ENCODE measurements at regions of chr12 and their contacts with region 1.

Region 1: GRCh38 chr12:79373896-79374499 is 316.8 kb downstream of the PAWR start:
- DNase-seq: no peak
- ATAC-seq: peak; percentile 99
- H3K4me3 ChIP-seq: no peak overlapping the region
- H3K27ac ChIP-seq: no peak overlapping the region
- H3K4me1 ChIP-seq: no peaks in the 10 kb centered on the region
- H3K27me3 ChIP-seq: no peaks in the 10 kb centered on the region
- CTCF ChIP-seq: peak; percentile 33 to 91 (median 86); a peak in 4 of 6 replicates
- POLR2A ChIP-seq: no peak
- RAD21 ChIP-seq: peak; percentile 71

Region 2: DNA sequence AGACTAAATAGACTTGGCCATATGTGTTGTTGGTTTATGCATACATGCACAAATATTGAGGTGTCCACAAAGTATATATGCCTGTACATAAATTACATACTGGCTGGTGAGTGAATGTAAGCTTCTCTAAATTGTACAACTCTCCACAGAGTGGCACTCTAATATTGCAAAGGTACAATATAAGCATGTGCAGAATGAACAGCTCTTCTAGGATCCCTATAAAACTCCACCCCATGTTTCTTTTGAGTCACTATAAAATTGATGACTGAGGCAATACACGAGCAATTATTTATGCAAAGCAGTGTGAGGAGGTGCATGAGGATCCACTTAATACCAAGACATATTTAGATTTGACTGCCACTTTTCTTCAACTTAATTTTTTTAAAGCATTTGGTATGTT is 1371.1 kb before region 1 on chr12:
- CTCF ChIA-PET with region 1: no interaction called
- POLR2A ChIA-PET with region 1: no interaction called
- RAD21 ChIA-PET with region 1: no interaction called
- intact Hi-C with region 1: loop called (anchors 5 kb)
- DNase-seq: no peak
- ATAC-seq: no peak
- H3K4me3 ChIP-seq: no peak overlapping the region
- H3K27ac ChIP-seq: no peak overlapping the region
- H3K4me1 ChIP-seq: no peaks in the 10 kb centered on the region
- H3K27me3 ChIP-seq: no peaks in the 10 kb centered on the region
- CTCF ChIP-seq: no peak
- POLR2A ChIP-seq: no peak
- RAD21 ChIP-seq: peak; percentile 42

Region 3: DNA sequence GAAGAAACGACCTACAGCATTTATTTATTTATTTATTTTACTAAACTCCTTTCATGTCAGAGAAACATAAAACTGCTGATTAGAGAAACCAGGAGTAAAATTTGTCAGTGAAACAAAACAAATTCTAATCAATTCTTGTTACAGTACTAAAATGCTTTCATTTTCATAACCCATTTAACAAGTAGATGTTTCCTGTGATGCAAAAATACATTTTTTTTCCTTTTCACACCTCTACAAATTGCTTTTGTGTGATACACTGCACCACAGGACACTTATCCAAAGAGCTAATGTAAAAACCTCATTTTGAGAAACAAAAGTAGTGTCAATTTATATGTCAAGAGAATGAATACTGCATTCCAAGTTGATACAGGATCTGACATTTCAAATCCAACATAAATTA is 354.3 kb before region 1 on chr12:
- CTCF ChIA-PET with region 1: no interaction called
- POLR2A ChIA-PET with region 1: no interaction called
- RAD21 ChIA-PET with region 1: no interaction called
- intact Hi-C with region 1: loop called (anchors 10 kb)
- DNase-seq: no peak
- ATAC-seq: no peak
- H3K4me3 ChIP-seq: no peak overlapping the region
- H3K27ac ChIP-seq: no peak overlapping the region
- H3K4me1 ChIP-seq: no peaks in the 10 kb centered on the region
- H3K27me3 ChIP-seq: no peaks in the 10 kb centered on the region
- CTCF ChIP-seq: no peak
- POLR2A ChIP-seq: no peak
- RAD21 ChIP-seq: no peak

Region 4: GRCh38 chr12:79098530-79098929 is 275.5 kb before region 1 on chr12:
- CTCF ChIA-PET with region 1: no interaction called
- POLR2A ChIA-PET with region 1: no interaction called
- RAD21 ChIA-PET with region 1: no interaction called
- intact Hi-C with region 1: no loop called
- DNase-seq: no peak
- ATAC-seq: no peak
- H3K4me3 ChIP-seq: no peak overlapping the region
- H3K27ac ChIP-seq: no peak overlapping the region
- H3K4me1 ChIP-seq: no peaks in the 10 kb centered on the region
- H3K27me3 ChIP-seq: no peaks in the 10 kb centered on the region
- CTCF ChIP-seq: no peak
- POLR2A ChIP-seq: no peak
- RAD21 ChIP-seq: no peak

Region 5: DNA sequence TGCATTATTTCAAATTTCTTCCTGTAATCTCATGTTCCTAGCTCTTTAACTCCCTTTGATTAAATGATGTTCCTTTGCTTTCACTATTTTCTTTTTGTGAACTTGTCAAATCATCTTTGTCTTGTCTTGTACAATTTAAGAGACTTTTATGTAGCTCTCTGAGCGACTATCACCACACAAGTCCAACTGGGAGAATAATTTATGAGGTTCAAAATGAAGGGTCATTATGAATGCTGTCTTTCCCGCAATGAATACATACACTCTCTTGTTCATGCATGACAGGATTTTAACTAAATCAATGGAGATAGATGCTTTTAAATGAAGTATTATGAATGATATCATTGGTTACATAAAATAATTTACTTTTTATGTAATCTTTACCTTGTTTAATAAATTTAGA is 90.6 kb before region 1 on chr12:
- CTCF ChIA-PET with region 1: no interaction called
- POLR2A ChIA-PET with region 1: no interaction called
- RAD21 ChIA-PET with region 1: no interaction called
- intact Hi-C with region 1: no loop called
- DNase-seq: no peak
- ATAC-seq: no peak
- H3K4me3 ChIP-seq: no peak overlapping the region
- H3K27ac ChIP-seq: no peak overlapping the region
- H3K4me1 ChIP-seq: no peaks in the 10 kb centered on the region
- H3K27me3 ChIP-seq: no peaks in the 10 kb centered on the region
- CTCF ChIP-seq: no peak
- POLR2A ChIP-seq: no peak
- RAD21 ChIP-seq: no peak

Region 6: DNA sequence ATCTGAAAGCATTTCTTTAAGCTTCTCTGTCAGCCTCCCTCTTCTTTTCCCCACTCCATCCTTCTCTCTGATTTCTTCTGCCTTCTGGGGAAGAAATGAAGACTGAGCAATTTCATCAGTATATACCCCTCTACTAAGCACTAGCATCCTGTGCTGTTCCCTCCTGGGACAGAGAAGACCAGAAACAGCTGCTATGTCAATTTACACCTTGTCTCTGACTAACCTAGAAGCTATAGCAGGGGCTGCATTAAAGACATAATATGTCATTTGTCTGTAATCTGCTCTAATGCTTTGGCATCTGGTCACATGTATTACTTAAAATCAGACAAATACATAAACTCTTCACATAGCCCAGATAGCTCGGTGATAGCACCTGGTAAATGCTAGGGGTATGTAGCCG is 19.8 kb after region 1 on chr12:
- CTCF ChIA-PET with region 1: no interaction called
- POLR2A ChIA-PET with region 1: no interaction called
- RAD21 ChIA-PET with region 1: no interaction called
- intact Hi-C with region 1: no loop called
- DNase-seq: no peak
- ATAC-seq: no peak
- H3K4me3 ChIP-seq: no peak overlapping the region
- H3K27ac ChIP-seq: no peak overlapping the region
- H3K4me1 ChIP-seq: peaks cover 0 to 3% of the 10 kb centered on the region in 2 experiments; a peak in 1 of 4 replicates
- H3K27me3 ChIP-seq: no peaks in the 10 kb centered on the region
- CTCF ChIP-seq: no peak
- POLR2A ChIP-seq: no peak
- RAD21 ChIP-seq: no peak